AG04450 (cell line): ENCODE measurements at regions of chr2 and their contacts with region 1.

Region 1: DNA sequence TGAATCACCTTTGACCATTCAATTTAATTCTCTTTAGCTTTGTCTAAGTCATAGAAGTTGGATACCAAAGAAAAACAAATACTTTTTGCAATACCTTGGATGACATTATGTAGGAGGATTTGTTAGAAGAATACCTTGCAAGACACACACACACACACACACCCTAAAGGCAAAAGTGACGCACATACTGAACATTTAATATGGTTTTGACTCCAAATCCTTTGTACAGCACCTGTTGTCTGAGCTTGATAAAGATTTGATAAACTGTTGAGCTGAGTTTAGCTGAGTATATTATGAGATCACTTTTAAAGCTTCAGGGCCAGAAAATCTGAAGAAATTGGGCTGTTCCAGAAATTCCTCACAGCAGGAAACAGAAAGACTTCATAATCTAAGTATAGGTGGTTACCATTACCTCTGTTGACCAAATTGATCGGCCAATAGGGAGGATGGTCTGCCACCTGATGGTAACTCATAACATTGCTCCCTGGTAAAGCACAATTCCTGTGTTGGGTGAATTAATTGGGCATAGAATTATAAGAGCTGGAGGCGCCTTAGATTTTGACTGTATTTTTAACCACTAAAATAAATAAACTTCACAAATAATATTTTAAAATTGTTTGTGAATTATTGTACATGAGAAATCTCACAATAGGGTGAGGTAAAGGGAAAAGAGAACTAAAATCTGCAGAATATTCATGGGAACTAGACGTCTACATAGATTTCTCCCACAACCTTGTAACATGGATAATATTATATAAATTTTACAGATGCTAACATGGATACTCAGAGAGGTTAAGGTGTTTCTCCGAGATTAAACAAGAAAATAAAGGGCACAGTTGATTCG is 21.9 kb upstream of the RPIA start:
- DNase-seq: no peak
- H3K4me3 ChIP-seq: no peak overlapping the region
- H3K27ac ChIP-seq: no peak overlapping the region
- H3K27me3 ChIP-seq: peaks cover 9% of the 10 kb centered on the region
- CTCF ChIP-seq: peak; percentile 74

Region 2: DNA sequence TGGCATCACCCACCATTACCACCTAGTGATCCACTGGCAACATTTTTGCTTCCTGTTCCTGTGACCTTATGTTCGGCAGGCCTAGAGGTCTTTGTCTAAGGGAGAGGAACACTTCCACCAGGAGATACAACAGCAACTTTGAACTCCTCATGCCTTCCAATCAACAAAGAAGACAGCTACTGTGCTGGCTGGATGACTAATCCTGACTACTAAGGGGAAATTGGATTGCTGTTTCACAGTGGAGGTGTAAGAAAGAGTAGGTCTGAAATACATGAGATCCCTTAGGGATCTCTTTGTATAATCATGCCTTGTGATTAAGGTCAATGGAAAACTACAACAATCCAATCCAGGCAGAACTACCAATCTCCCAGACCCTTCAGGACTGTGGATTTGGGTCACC is 87.6 kb before region 1 on chr2:
- CTCF ChIA-PET with region 1: interaction called, 294 read pairs
- POLR2A ChIA-PET with region 1: no interaction called
- DNase-seq: no peak
- H3K4me3 ChIP-seq: no peak overlapping the region
- H3K27ac ChIP-seq: no peak overlapping the region
- H3K27me3 ChIP-seq: no peaks in the 10 kb centered on the region
- CTCF ChIP-seq: no peak

Region 3: DNA sequence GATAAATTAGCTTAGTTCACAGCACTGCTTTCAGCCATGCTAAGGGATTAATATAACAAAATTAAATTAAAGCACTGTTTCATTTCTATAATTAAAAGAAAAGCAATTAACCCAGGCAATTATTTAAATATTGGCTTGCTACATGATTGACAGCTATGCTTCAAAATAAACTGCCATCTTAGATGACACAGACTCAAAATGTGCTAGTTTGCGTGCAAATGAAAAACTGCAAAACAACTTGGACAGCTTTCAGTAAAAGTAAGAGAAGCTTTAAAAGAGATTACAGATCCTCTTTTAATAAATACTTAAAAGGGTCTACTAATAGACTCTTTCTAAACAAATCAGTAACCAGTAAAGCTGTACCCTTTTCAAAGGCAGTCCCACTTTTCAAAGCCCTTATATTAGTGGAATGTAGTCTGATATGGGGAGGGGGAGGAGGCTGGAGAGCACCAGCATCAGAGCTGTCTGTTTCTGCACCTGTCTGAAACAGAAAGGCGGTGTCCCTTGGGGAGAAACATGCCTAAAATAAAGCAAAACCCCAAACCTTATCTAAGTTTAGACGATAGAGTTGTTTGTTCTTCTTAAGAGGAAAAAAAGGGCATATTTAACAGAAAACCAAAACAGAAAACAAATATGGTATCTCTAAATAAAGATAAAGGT is 63.1 kb before region 1 on chr2:
- CTCF ChIA-PET with region 1: interaction called, 15 read pairs
- POLR2A ChIA-PET with region 1: interaction called, 4 read pairs
- DNase-seq: no peak
- H3K4me3 ChIP-seq: no peak overlapping the region
- H3K27ac ChIP-seq: no peak overlapping the region
- H3K27me3 ChIP-seq: no peaks in the 10 kb centered on the region
- CTCF ChIP-seq: no peak

Region 4: GRCh38 chr2:88622307-88622706 is 47.3 kb before region 1 on chr2:
- CTCF ChIA-PET with region 1: interaction called, 13 read pairs
- POLR2A ChIA-PET with region 1: no interaction called
- DNase-seq: no peak
- H3K4me3 ChIP-seq: no peak overlapping the region
- H3K27ac ChIP-seq: no peak overlapping the region
- H3K27me3 ChIP-seq: no peaks in the 10 kb centered on the region
- CTCF ChIP-seq: no peak

Region 5: DNA sequence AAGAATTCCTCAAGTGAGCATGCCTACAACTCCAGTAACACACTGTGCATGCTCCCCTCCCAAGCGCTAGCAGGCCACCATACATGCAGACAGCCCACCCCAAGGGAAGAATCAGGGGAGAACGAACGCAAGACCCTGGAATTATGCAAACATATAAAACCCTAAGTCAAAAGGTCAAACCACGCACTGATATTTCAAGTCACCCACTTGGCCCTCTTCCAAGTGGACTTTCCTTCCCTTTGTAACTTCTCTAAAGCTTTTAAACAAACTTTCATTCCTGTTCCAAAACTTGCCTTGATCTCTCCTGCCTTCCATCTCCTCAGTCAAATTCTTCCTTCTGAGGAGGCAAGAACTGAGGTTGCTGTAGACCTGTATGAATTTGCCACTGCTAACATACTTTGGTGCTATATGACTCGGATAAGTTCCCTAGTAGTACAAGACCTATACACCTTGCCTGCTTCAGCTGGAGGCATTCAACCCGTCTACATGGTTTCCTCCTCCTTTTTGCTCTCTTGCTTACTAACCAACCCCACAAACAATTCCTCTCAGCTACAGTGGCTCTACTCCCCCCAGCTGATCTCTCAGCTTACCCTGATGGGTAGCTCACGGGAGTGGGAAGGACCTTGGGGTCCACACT is 10.8 kb after region 1 on chr2:
- CTCF ChIA-PET with region 1: interaction called, 11 read pairs
- POLR2A ChIA-PET with region 1: no interaction called
- DNase-seq: no peak
- H3K4me3 ChIP-seq: no peak overlapping the region
- H3K27ac ChIP-seq: no peak overlapping the region
- H3K27me3 ChIP-seq: peaks cover 11% of the 10 kb centered on the region
- CTCF ChIP-seq: no peak

Region 6: GRCh38 chr2:88747990-88748389 is 78.4 kb after region 1 on chr2:
- CTCF ChIA-PET with region 1: no interaction called
- POLR2A ChIA-PET with region 1: no interaction called
- DNase-seq: no peak
- H3K4me3 ChIP-seq: no peak overlapping the region
- H3K27ac ChIP-seq: no peak overlapping the region
- H3K27me3 ChIP-seq: no peaks in the 10 kb centered on the region
- CTCF ChIP-seq: no peak

Region 7: GRCh38 chr2:88818381-88818780 is 148.8 kb after region 1 on chr2:
- CTCF ChIA-PET with region 1: no interaction called
- POLR2A ChIA-PET with region 1: no interaction called
- DNase-seq: no peak
- H3K4me3 ChIP-seq: no peak overlapping the region
- H3K27ac ChIP-seq: no peak overlapping the region
- H3K27me3 ChIP-seq: no peaks in the 10 kb centered on the region
- CTCF ChIP-seq: no peak